HEK293 (cell line): ENCODE measurements at regions of chr12 and their contacts with region 1.

Region 1: DNA sequence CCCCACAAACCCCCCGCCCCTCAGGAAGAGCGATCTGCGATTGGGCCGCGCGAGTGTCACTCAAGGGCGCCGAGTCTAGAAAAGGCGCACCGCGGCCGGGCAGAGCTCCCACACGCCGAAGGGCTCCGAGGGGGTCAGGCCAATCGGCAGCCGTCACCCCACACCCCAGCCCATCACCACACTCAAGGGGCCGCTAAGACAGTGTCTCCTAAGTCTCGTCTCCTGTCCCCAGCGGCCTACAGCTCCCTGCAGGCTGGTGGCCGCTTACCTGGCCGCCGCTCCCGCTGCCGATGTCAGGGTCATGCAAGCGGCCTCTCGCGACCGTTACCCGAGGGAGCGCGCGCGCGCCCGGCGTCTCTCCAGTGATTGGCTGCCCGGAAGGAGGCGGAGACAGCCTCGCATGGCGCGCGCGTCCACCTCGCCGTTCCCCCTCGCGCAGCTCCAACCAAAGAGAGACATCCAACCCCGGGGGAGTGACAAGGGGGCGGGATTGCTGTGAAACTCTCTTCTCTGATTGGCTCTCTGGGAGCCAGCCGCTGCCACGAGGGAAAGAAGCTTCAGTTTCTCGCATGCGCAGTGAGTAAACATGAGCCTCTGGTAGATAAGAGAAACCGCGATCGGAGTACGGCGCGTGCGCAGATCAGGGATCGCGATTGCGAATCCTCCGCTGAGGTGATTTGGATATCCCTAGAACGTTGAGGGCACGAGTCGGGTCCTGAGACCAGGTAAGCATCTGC is at the starts of genes MPHOSPH9 and MTRFR:
- H3K4me3 ChIP-seq: peak within 1 kb of the TSS; percentile 90
- H3K27ac ChIP-seq: peak within 1 kb of the TSS; percentile 86
- H3K4me1 ChIP-seq: peaks cover 13% of the 10 kb centered on the region
- CTCF ChIP-seq: no peak

Region 2: DNA sequence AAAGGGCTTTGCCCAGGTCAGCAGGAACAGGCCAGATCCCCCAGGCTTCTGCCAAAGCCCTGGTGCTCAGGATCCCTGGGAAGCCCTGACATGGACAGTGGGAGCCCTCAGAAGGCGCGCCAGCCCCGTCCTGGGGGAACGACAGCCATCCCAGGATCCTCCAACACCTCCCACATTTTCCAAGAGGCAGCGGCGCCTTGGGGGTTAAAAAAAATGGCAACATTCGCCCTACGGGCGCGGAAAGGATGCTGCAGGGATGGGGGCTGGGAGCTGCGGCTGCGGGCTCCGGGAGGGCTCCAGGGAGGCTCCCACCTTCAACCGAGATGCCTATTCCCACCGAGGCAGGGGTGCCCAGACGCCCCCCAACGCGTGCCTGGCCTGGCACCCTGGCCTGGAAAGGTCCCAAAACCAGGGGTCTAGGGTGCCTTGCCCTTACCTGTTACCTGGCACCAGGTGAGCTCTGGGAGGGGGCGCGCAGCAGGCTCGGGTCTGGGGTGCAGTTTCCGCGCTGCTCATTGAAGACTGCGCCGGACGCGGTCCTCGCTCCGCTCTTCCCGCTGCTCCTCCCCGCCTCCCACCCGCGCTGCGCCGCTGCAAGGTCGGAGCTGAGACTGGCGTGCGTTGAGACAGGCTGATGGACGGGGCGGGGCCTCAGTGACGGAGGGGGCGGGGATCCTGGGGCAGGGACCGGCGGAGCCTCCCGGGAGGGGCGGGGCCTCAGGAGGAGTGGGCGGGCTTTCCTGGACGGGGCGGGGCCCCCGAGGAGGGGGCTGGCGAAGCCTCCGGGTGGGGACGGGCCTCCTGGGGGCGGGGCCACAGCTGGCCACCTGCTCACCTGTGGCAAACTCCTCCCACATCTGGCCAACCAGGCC is 266.9 kb before region 1 on chr12 and contains the start of gene ABCB9:
- CTCF ChIA-PET with region 1: no interaction called
- POLR2A ChIA-PET with region 1: interaction called, 13 read pairs
- H3K4me3 ChIP-seq: peak within 1 kb of the TSS; percentile 71
- H3K27ac ChIP-seq: peak within 1 kb of the TSS; percentile 48; the same call in 1 of the 2 replicates
- H3K4me1 ChIP-seq: peaks cover 12% of the 10 kb centered on the region
- CTCF ChIP-seq: no peak

Region 3: GRCh38 chr12:123043536-123044001 is 189.4 kb before region 1 on chr12:
- CTCF ChIA-PET with region 1: interaction called, 16 read pairs
- POLR2A ChIA-PET with region 1: interaction called, 14 read pairs
- H3K4me3 ChIP-seq: no peak overlapping the region
- H3K27ac ChIP-seq: no peak overlapping the region
- H3K4me1 ChIP-seq: no peaks in the 10 kb centered on the region
- CTCF ChIP-seq: peak; percentile 68

Region 4: DNA sequence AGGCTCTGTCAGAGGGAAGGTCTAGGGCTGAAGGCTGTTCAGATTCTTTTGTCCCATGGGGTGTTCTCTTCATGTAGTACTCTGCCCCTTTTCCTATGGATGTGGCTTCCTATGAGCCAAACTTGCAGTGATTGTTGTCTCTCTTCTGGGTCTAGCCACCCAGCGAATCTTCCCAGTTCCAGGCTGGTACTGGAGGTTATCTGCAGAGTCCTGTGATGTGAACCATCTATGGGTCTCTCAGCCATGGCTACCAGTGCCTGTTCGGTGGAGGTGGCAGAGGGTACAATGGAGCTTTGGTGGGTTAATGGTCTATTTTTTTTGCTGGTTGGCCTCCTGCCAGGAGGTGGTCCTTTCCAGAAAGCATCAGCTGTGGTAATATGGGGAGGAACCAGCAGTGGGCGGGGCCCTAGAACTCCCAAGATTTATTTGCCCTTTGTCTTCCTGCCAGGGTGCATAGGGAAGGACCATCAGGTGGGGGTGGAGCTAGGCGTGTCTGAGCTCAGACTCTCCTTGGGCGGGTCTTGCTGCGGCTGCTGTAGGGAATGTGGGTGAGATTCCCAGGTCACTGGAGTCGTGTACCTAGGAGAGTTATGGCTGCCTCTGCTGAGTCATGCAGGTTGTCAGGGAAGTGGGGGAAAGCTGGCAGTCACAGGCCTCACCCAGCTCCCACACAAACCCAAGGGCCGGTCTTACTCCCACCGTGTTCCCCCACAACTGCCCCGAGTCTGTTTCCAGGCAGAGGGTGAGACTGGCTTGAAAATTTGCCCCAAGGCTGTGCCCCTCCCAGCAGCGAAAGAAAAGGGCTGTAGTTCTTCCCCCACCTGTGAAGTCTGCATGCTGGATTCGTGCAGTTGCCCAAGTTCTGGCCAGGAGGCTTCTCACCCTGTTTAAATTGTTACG is 17.8 kb after region 1 on chr12:
- CTCF ChIA-PET with region 1: interaction called, 18 read pairs
- POLR2A ChIA-PET with region 1: interaction called, 56 read pairs
- H3K4me3 ChIP-seq: no peak overlapping the region
- H3K27ac ChIP-seq: peak overlapping the region; percentile 7; the same call in 1 of the 2 replicates
- H3K4me1 ChIP-seq: no peaks in the 10 kb centered on the region
- CTCF ChIP-seq: no peak

Region 5: GRCh38 chr12:123269384-123269892 is 36.5 kb after region 1 on chr12:
- CTCF ChIA-PET with region 1: interaction called, 4 read pairs
- POLR2A ChIA-PET with region 1: interaction called, 10 read pairs
- H3K4me3 ChIP-seq: no peak overlapping the region
- H3K27ac ChIP-seq: no peak overlapping the region
- H3K4me1 ChIP-seq: peaks cover 6% of the 10 kb centered on the region
- CTCF ChIP-seq: no peak

Region 6: GRCh38 chr12:123293178-123293760 is 60.3 kb after region 1 on chr12:
- CTCF ChIA-PET with region 1: no interaction called
- POLR2A ChIA-PET with region 1: no interaction called
- H3K4me3 ChIP-seq: no peak overlapping the region
- H3K27ac ChIP-seq: no peak overlapping the region
- H3K4me1 ChIP-seq: no peaks in the 10 kb centered on the region
- CTCF ChIP-seq: no peak

Region 7: DNA sequence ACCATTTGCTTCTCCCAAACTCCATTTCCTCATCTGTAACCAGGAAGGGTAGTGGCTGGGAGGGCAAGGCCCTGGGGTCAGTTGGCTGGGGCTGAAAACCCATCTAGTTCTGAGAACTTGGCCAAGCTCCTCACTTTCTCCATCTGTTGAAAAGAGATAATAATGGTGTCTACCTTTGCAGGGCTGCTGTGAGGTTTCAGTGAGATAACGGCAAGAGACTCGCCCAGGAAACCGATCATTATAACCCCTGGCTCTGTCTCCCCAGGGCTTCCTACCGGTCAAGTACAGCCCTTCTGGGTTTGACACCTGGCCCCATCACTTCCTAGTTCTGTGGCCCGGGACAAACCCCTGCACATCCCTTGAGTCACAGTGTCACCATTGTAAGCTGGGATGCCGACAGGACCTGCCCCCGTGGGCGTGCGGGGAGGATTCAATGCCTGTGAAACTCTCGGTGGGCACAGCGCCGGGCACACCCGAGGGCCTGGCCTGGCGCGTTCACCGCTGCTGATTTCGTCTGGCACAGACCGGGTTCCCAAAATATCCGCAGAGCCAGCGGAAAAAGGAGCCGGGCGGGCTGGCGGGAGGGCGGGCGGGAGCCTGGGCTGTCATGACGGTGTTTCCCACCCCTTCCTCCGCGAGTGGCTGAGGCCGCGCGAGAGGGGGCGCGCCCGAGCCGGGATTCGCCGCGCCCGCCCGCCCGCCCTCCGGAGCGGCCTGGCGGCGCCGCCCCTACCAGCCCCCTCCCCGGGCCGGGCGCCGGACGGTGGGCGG is 155.4 kb after region 1 on chr12:
- CTCF ChIA-PET with region 1: interaction called, 3 read pairs
- POLR2A ChIA-PET with region 1: interaction called, 23 read pairs
- H3K4me3 ChIP-seq: peak overlapping the region; percentile 52
- H3K27ac ChIP-seq: no peak overlapping the region; the same call in 1 of the 2 replicates
- H3K4me1 ChIP-seq: peaks cover 2% of the 10 kb centered on the region; the same call in 1 of the 2 replicates
- CTCF ChIP-seq: no peak